Activated naive CD4-positive, alpha-beta T cell treated with anti-CD3 and anti-CD28 coated beads for 36 hours (primary cell): ENCODE measurements at regions of chr17 and their contacts with region 1.

Region 1: DNA sequence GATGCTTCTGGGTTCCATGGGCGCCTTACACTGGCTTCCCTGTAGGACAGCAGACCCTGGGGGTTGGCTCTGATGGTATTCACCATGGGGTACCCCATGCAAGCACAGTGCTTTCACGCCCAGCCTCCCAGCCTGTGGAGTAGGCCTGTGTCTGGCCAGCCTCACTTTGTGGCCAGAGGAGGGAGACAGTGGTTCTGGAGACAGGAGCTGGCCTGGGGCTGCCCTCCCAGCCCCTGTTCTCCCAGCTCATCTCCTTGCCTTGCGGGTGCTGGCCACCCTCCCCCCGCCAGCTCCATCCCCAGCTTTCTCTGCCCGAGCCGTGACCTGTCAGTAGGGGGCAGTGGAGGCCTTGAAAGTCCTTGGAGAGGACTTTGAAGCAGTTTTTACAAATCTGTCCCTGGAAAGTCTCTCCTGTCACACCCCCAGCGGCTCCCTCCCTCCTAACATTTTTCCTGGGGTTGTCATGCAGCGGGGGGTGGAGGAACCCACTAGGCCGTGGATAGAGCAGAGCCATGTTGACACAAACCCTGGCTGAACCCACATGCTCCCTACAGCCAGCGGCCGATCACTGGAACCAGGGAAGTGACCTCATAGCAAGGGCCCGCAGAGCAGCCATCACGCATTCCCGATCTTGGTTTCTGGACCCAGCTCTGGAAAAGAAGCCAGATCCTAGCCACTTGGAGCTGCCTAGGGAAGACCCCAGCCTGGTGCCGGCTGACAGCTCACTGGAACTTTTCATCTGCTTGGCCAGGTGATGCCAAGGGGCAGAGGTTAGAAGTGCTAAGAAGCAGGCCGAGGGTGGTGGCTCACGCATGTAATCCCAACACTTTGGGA is 289.4 kb downstream of the SEC14L1 start:
- DNase-seq: peak; percentile 94
- H3K4me3 Mint-ChIP-seq: no peak overlapping the region
- H3K27ac Mint-ChIP-seq: peak overlapping the region; percentile 41
- H3K4me1 Mint-ChIP-seq: peaks cover 92% of the 10 kb centered on the region
- H3K27me3 Mint-ChIP-seq: no peaks in the 10 kb centered on the region

Region 2: GRCh38 chr17:77444984-77445759 is 15.0 kb after region 1 on chr17:
- CTCF ChIA-PET with region 1: interaction called, 26 read pairs
- intact Hi-C with region 1: loop called (anchors 1 kb)
- DNase-seq: peak; percentile 87
- H3K4me3 Mint-ChIP-seq: peak overlapping the region; percentile 58
- H3K27ac Mint-ChIP-seq: peak overlapping the region; percentile 94
- H3K4me1 Mint-ChIP-seq: peaks cover 89% of the 10 kb centered on the region
- H3K27me3 Mint-ChIP-seq: no peaks in the 10 kb centered on the region

Region 3: DNA sequence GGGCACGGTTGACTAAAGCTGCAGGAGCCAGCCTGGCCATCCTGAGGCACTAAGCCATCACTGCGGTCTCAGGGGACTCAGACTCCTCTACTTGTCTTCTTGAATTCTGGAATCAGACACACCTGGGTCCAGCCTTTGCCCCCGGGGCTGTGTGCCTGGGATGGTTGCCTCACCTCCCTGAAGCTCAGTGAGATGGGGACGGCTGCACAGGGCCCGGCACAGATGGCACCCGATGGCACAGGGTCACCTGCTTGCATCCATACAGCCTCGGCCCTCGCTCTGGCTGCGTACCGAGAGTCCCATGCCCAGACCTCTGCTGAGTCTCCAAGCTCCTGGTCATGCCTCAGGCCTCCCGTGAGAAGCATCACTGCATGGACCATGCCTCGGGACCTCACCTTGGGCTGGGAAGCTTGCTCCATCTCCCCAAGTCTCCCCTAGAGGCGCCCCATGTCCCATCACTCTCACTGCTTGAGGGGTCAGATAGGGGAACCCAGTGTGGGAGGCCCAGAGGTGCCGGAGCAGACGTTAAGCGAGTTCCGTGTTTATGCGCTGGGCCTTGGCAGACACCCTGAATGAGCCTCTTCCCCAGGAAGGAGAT is 26.9 kb after region 1 on chr17:
- CTCF ChIA-PET with region 1: interaction called, 18 read pairs
- intact Hi-C with region 1: loop called (anchors 1 kb)
- DNase-seq: peak; percentile 71
- H3K4me3 Mint-ChIP-seq: peak overlapping the region; percentile 86
- H3K27ac Mint-ChIP-seq: peak overlapping the region; percentile 100
- H3K4me1 Mint-ChIP-seq: peaks cover 42% of the 10 kb centered on the region
- H3K27me3 Mint-ChIP-seq: no peaks in the 10 kb centered on the region

Region 4: GRCh38 chr17:77471984-77472461 is 41.9 kb after region 1 on chr17:
- CTCF ChIA-PET with region 1: interaction called, 16 read pairs
- intact Hi-C with region 1: loop called (anchors 1 kb)
- DNase-seq: no peak
- H3K4me3 Mint-ChIP-seq: peak overlapping the region; percentile 67
- H3K27ac Mint-ChIP-seq: peak overlapping the region; percentile 98
- H3K4me1 Mint-ChIP-seq: peaks cover 97% of the 10 kb centered on the region
- H3K27me3 Mint-ChIP-seq: no peaks in the 10 kb centered on the region

Region 5: DNA sequence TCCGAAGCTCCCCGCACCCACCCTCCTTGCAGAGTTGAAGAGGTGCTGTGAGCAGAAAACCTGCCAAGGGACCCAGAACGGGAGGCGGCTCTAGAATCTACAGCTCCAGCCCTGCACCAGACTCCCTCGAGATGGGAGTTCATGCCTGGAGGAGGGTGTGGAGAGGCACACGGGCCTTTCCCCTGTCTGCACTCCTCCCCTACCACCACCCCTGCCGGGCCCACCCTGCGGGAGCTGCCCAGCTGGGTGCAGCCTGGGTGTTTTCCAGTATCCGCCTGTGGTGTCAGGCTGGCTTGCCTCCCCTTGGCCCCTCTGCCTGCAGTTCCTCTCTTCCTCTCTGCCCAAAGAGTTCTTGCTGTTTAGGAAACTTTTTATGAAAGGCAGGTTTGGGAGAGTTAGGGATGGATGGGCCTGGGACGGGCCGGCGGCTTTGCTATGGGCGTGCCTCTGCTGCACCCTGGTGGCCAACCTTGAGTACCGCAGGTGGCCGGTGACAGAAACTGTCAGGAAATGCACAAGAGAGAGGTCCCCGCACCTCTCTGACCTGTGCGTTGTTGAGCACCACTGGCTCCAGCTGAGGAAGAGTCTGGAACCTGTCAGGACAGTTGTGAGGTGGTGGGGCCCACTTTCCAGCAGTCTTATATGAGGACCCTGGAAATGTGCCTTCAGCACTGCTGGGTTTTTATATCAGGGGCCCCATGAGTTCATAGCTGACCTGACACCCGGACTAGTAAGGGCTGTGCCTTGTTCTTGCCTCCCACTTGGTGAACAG is 64.7 kb after region 1 on chr17:
- CTCF ChIA-PET with region 1: interaction called, 93 read pairs
- intact Hi-C with region 1: loop called (anchors 1 kb)
- DNase-seq: peak; percentile 81
- H3K4me3 Mint-ChIP-seq: no peak overlapping the region
- H3K27ac Mint-ChIP-seq: peak overlapping the region; percentile 77
- H3K4me1 Mint-ChIP-seq: peaks cover 11% of the 10 kb centered on the region
- H3K27me3 Mint-ChIP-seq: no peaks in the 10 kb centered on the region